ENCODE measurements at regions of chr16 and their contacts with region 1.

Region 1: GRCh38 chr16:71883849-71884638 is at the start of gene ZNF821:
- DNase-seq: peak; percentile 79
- H3K4me3 Mint-ChIP-seq: peak within 1 kb of the TSS; percentile 93
- H3K27ac Mint-ChIP-seq: peak within 1 kb of the TSS; percentile 91
- H3K4me1 Mint-ChIP-seq: peaks cover 53% of the 10 kb centered on the region
- H3K27me3 Mint-ChIP-seq: peaks cover 23% of the 10 kb centered on the region

Region 2: GRCh38 chr16:71840012-71840411 is 44.0 kb before region 1 on chr16:
- CTCF ChIA-PET with region 1: interaction called, 15 read pairs
- DNase-seq: no peak
- H3K4me3 Mint-ChIP-seq: no peak overlapping the region
- H3K27ac Mint-ChIP-seq: no peak overlapping the region
- H3K4me1 Mint-ChIP-seq: peaks cover 14% of the 10 kb centered on the region
- H3K27me3 Mint-ChIP-seq: no peaks in the 10 kb centered on the region

Region 3: DNA sequence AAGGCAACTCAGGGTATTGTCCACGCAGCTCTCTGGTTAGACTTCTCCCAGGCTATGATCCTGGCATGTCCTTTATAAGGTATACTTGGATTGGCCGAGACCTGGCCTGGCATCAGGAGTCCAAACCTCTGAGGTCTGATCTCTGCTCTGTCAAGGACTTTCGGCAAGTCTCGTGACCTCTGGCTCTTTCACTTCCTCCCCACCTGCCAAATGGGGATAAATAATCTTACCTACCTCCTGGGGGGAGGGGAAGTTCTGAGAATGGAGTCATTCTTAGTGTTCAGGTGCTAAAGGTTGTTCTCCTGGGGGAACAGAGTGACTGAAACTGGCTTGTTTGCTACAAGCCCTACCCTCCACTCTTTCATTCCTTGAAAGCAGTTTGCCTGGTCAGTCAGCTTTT is 30.6 kb before region 1 on chr16:
- CTCF ChIA-PET with region 1: interaction called, 11 read pairs
- DNase-seq: no peak
- H3K4me3 Mint-ChIP-seq: no peak overlapping the region
- H3K27ac Mint-ChIP-seq: peak overlapping the region; percentile 78
- H3K4me1 Mint-ChIP-seq: peaks cover 49% of the 10 kb centered on the region
- H3K27me3 Mint-ChIP-seq: no peaks in the 10 kb centered on the region

Region 4: GRCh38 chr16:71870818-71871217 is 13.2 kb before region 1 on chr16:
- CTCF ChIA-PET with region 1: interaction called, 61 read pairs
- DNase-seq: no peak
- H3K4me3 Mint-ChIP-seq: no peak overlapping the region
- H3K27ac Mint-ChIP-seq: no peak overlapping the region
- H3K4me1 Mint-ChIP-seq: peaks cover 32% of the 10 kb centered on the region
- H3K27me3 Mint-ChIP-seq: no peaks in the 10 kb centered on the region

Region 5: GRCh38 chr16:71894921-71895678 is 11.1 kb after region 1 on chr16 and contains the start of gene IST1:
- CTCF ChIA-PET with region 1: interaction called, 33 read pairs
- DNase-seq: peak; percentile 99
- H3K4me3 Mint-ChIP-seq: peak within 1 kb of the TSS; percentile 99
- H3K27ac Mint-ChIP-seq: peak within 1 kb of the TSS; percentile 99
- H3K4me1 Mint-ChIP-seq: peaks cover 40% of the 10 kb centered on the region
- H3K27me3 Mint-ChIP-seq: peaks cover 4% of the 10 kb centered on the region

Region 6: GRCh38 chr16:71961066-71962039 is 77.3 kb after region 1 on chr16:
- CTCF ChIA-PET with region 1: interaction called, 18 read pairs
- DNase-seq: peak; percentile 91
- H3K4me3 Mint-ChIP-seq: no peak overlapping the region
- H3K27ac Mint-ChIP-seq: no peak overlapping the region
- H3K4me1 Mint-ChIP-seq: peaks cover 29% of the 10 kb centered on the region
- H3K27me3 Mint-ChIP-seq: peaks cover 19% of the 10 kb centered on the region

Region 7: GRCh38 chr16:71995038-71995437 is 111.0 kb after region 1 on chr16:
- CTCF ChIA-PET with region 1: no interaction called
- DNase-seq: no peak
- H3K4me3 Mint-ChIP-seq: no peak overlapping the region
- H3K27ac Mint-ChIP-seq: no peak overlapping the region
- H3K4me1 Mint-ChIP-seq: peaks cover 8% of the 10 kb centered on the region
- H3K27me3 Mint-ChIP-seq: peaks cover 11% of the 10 kb centered on the region

Region 8: GRCh38 chr16:72066747-72067146 is 182.7 kb after region 1 on chr16:
- CTCF ChIA-PET with region 1: no interaction called
- DNase-seq: no peak
- H3K4me3 Mint-ChIP-seq: no peak overlapping the region
- H3K27ac Mint-ChIP-seq: no peak overlapping the region
- H3K4me1 Mint-ChIP-seq: no peaks in the 10 kb centered on the region
- H3K27me3 Mint-ChIP-seq: no peaks in the 10 kb centered on the region